Activated CD4-positive, alpha-beta T cell treated with anti-CD3 and anti-CD28 coated beads for 36 hours (primary cell): ENCODE measurements at regions of chr9 and their contacts with region 1.

Region 1: DNA sequence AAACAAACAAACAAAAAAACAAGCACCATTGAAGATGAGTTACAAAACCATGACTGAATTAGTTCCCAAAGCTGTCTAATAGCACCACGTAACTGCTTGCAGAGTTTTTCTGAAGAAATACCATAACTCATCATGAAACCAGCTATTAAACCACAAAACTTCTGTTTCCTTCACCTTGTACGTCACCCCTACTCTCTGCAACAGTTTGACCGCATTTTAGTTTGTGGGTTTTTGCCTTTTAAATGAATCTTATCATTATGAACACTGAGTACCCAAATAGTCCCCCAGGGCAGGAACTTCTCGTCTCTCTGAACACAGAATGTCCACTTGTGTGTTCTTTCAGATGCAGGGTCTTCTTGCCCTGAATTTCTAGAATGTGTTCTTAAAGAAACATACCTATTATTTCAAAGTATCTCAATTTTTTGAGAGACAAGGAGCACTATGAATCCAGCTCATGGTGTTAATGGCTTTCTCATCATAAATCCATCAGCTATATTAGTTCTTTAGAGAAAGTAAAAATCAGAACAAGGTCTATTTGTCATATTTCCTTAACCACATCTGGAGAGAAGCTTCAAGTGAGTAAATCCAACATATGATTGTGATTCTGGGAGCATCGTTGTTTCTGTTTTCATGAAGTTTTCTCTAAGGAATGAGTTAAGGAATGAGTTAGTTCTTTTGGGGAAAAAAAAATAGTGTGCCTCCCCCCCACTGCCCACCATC is 210.6 kb downstream of the AUH start:
- DNase-seq: peak; percentile 66
- ATAC-seq: peak; percentile 65
- H3K4me3 Mint-ChIP-seq: peak overlapping the region; percentile 13
- H3K27ac Mint-ChIP-seq: peak overlapping the region; percentile 95
- H3K4me1 Mint-ChIP-seq: peaks cover 79% of the 10 kb centered on the region
- H3K27me3 Mint-ChIP-seq: no peaks in the 10 kb centered on the region

Region 2: DNA sequence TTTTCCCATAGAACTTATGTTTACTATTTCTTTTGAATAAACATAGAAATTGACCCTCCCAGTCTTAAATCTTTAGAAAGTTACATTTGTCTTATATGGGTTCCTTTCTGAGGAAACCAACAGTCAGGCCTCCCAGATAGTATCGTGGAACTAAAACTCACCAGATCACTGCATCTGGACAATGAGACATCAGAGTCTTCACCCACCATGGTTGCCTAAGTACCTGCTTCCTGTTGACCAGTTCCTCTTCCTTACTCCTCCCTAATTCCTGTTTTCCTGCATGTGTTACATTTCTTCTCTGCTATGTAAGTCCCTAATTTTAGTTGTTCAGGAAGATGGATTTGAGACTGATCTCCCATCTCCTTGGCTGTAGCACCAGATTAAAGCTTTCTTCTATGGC is 970.8 kb before region 1 on chr9:
- CTCF ChIA-PET with region 1: no interaction called
- POLR2A ChIA-PET with region 1: no interaction called
- intact Hi-C with region 1: no loop called
- DNase-seq: no peak
- ATAC-seq: no peak
- H3K4me3 Mint-ChIP-seq: no peak overlapping the region
- H3K27ac Mint-ChIP-seq: no peak overlapping the region
- H3K4me1 Mint-ChIP-seq: no peaks in the 10 kb centered on the region
- H3K27me3 Mint-ChIP-seq: peaks cover 4% of the 10 kb centered on the region

Region 3: GRCh38 chr9:91047993-91048607 is 103.1 kb before region 1 on chr9:
- CTCF ChIA-PET with region 1: no interaction called
- POLR2A ChIA-PET with region 1: no interaction called
- intact Hi-C with region 1: loop called (anchors 1 kb)
- DNase-seq: peak; percentile 75
- ATAC-seq: peak; percentile 83
- H3K4me3 Mint-ChIP-seq: peak overlapping the region; percentile 46
- H3K27ac Mint-ChIP-seq: peak overlapping the region; percentile 96
- H3K4me1 Mint-ChIP-seq: peaks cover 82% of the 10 kb centered on the region
- H3K27me3 Mint-ChIP-seq: peaks cover 23% of the 10 kb centered on the region

Region 4: DNA sequence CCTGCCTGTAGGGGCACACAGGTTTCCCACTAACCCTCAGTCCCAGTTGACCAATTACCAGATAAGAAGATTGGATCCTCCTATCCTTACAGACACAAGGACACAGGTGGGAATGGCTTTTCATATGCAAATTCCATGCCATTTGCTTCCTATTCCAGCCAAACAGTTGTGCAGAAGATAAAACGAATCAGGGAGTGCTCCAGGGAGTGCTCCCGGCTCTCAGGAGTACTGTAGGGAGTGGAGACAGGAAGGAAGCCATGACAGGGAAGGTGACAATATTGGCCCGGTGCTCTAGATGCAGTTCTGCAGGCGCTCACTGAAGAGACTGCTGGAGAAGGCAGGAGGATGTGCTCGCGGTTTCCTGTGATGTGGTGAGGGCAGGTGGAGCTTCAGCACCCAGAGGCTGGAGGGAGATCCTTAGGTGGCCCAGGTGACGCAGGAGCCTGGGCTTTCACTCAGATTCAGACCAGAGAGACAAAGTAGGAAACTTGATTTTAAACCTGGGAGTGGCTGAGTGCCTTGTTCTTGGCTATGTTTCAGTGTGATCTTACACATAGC is 49.5 kb before region 1 on chr9:
- CTCF ChIA-PET with region 1: interaction called, 16 read pairs
- POLR2A ChIA-PET with region 1: interaction called, 56 read pairs
- intact Hi-C with region 1: loop called (anchors 1 kb)
- DNase-seq: peak; percentile 96
- ATAC-seq: peak; percentile 82
- H3K4me3 Mint-ChIP-seq: peak overlapping the region; percentile 81
- H3K27ac Mint-ChIP-seq: peak overlapping the region; percentile 97
- H3K4me1 Mint-ChIP-seq: peaks cover 70% of the 10 kb centered on the region
- H3K27me3 Mint-ChIP-seq: no peaks in the 10 kb centered on the region

Region 5: GRCh38 chr9:91177661-91178280 is 26.6 kb after region 1 on chr9:
- CTCF ChIA-PET with region 1: interaction called, 12 read pairs
- POLR2A ChIA-PET with region 1: interaction called, 25 read pairs
- intact Hi-C with region 1: loop called (anchors 1 kb)
- DNase-seq: peak; percentile 79
- ATAC-seq: peak; percentile 73
- H3K4me3 Mint-ChIP-seq: peak overlapping the region; percentile 22
- H3K27ac Mint-ChIP-seq: peak overlapping the region; percentile 99
- H3K4me1 Mint-ChIP-seq: peaks cover 64% of the 10 kb centered on the region
- H3K27me3 Mint-ChIP-seq: no peaks in the 10 kb centered on the region

Region 6: GRCh38 chr9:91346652-91347051 is 195.5 kb after region 1 on chr9:
- CTCF ChIA-PET with region 1: no interaction called
- POLR2A ChIA-PET with region 1: no interaction called
- intact Hi-C with region 1: loop called (anchors 2 to 5 kb)
- DNase-seq: no peak
- ATAC-seq: peak; percentile 65
- H3K4me3 Mint-ChIP-seq: no peak overlapping the region
- H3K27ac Mint-ChIP-seq: peak overlapping the region; percentile 3
- H3K4me1 Mint-ChIP-seq: peaks cover 56% of the 10 kb centered on the region
- H3K27me3 Mint-ChIP-seq: no peaks in the 10 kb centered on the region

Region 7: DNA sequence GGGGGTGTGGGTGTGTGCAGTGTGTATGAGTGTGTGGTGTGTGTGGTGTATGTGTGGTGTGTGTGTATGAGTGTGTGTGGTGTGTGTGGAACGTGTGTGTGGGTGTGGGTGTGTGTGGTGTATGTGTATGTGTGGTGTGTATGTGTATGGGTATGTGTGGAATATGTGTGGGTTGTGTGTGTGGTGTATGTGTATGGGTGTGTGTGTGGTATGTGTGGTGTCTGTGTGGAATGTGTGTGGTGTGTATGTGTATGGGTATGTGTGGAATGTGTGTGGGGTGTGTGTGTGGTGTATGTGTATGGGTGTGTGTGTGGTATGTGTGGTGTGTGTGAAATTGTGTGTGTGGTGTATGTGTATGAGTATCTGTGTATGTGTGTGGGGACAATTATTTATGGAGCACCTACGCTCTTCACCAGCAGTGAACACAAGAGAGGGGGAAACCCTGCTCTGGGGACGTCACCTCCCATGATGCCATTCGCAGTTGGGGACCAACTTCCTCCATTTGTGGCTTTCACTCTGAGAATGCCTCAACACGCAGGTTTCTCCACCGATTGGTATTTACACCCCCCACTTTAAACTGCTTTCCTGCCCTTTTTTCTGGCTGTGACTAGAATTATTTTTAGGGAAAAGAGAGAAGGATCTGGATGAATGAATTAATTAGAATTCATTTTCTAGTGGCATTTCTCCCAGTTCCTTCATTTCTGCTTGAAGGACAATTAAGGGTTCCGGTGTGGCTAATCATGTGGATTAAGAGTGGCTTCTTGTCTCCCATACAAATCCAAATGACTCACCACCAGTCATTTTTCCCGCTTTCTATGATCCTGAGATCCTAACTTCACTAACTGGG is 560.8 kb after region 1 on chr9:
- CTCF ChIA-PET with region 1: no interaction called
- POLR2A ChIA-PET with region 1: no interaction called
- intact Hi-C with region 1: loop called in 1 of 2 experiments (anchors 5 kb)
- DNase-seq: peak; percentile 88
- ATAC-seq: peak; percentile 97
- H3K4me3 Mint-ChIP-seq: no peak overlapping the region
- H3K27ac Mint-ChIP-seq: peak overlapping the region; percentile 26
- H3K4me1 Mint-ChIP-seq: no peaks in the 10 kb centered on the region
- H3K27me3 Mint-ChIP-seq: peaks cover 24% of the 10 kb centered on the region